CD4-positive, alpha-beta T cell (primary cell): ENCODE measurements at regions of chr9 and their contacts with region 1.

Region 1: DNA sequence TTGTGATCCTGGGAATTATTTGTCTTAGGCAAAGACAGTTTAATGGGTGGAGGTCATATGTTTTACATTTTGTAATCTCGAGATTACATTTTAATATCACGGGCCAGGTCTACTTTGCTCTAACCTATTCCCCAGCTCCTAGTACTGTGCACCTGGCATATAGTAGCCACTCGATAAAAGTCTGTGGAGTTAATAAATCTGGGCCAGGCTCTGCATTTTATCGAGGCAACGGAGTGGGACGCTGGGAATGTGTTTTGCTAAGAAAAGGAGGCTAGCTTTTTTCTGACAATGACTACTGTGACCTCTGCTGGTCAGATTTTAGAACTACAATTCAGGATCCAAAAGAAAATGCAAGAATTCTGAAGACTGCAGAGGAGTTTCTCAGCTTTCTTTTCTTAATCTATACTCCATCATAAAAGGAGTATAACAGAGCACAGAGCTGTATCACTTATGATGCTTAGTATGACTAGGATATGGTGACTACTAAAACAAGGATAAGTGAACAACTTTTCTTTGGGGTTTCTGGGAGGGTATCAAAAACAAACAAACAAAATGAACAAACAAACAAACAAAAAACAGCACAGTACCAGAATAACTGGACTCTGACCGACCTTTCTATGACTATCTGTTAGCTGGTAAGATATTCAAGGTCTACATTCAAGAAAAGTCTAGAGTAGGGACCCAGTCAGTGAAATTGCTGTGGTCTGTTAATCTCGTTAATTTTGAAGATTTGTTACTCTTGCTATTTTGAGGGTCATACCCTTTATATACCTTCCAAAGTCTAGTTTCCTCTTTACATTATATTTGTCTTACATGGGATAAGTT is 46.1 kb upstream of the CER1 start:
- DNase-seq: peak in 4 of 14 experiments; percentile 0 to 48 (median 38)
- ATAC-seq: no peak
- H3K4me3 ChIP-seq: no peak overlapping the region
- H3K4me3 Mint-ChIP-seq: no peak overlapping the region
- H3K27ac ChIP-seq: no peak overlapping the region
- H3K27ac Mint-ChIP-seq: no peak overlapping the region
- H3K4me1 ChIP-seq: no peaks in the 10 kb centered on the region
- H3K4me1 Mint-ChIP-seq: no peaks in the 10 kb centered on the region
- H3K27me3 ChIP-seq: no peaks in the 10 kb centered on the region
- H3K27me3 Mint-ChIP-seq: peaks cover 26% of the 10 kb centered on the region
- CTCF ChIP-seq: peak; percentile 78

Region 2: GRCh38 chr9:14616188-14616982 is 152.2 kb before region 1 on chr9:
- CTCF ChIA-PET with region 1: interaction called, 4 read pairs
- POLR2A ChIA-PET with region 1: interaction called, 3 read pairs
- intact Hi-C with region 1: loop called in 1 of 2 experiments (anchors 2 kb)
- DNase-seq: peak in 3 of 14 experiments; percentile 50 to 54 (median 51)
- ATAC-seq: no peak
- H3K4me3 ChIP-seq: no peak overlapping the region
- H3K4me3 Mint-ChIP-seq: no peak overlapping the region
- H3K27ac ChIP-seq: no peak overlapping the region
- H3K27ac Mint-ChIP-seq: no peak overlapping the region
- H3K4me1 ChIP-seq: no peaks in the 10 kb centered on the region
- H3K4me1 Mint-ChIP-seq: no peaks in the 10 kb centered on the region
- H3K27me3 ChIP-seq: no peaks in the 10 kb centered on the region
- H3K27me3 Mint-ChIP-seq: no peaks in the 10 kb centered on the region
- CTCF ChIP-seq: peak; percentile 65

Region 3: DNA sequence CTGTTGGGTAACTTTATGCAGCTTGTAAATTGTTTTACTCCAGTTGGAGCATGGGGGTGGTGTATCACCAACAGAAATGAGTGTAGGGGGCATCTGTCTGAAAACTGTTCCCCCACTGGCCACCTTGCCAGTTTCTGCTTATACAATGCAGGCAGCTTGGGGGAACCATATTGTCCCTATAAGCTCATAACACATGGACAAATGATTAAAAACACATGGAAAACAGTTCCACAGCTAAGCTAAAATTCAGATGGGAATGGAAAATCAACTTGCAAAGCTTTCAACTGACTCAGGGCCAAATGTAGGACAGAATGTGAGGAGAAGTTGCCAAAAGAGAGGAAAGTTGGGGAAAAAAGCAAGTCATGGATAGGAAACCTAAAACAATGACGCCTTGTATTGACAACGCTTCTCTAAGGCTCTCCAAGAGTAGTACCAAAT is 38.1 kb before region 1 on chr9:
- CTCF ChIA-PET with region 1: no interaction called
- POLR2A ChIA-PET with region 1: no interaction called
- intact Hi-C with region 1: no loop called
- DNase-seq: no peak
- ATAC-seq: no peak
- H3K4me3 ChIP-seq: no peak overlapping the region
- H3K4me3 Mint-ChIP-seq: no peak overlapping the region
- H3K27ac ChIP-seq: no peak overlapping the region
- H3K27ac Mint-ChIP-seq: no peak overlapping the region
- H3K4me1 ChIP-seq: no peaks in the 10 kb centered on the region
- H3K4me1 Mint-ChIP-seq: no peaks in the 10 kb centered on the region
- H3K27me3 ChIP-seq: no peaks in the 10 kb centered on the region
- H3K27me3 Mint-ChIP-seq: peaks cover 16% of the 10 kb centered on the region
- CTCF ChIP-seq: no peak